A673 (cell line): ENCODE measurements at regions of chr11 and their contacts with region 1.

Region 1: GRCh38 chr11:35822815-35823495 is 120.9 kb upstream of the LDLRAD3 start:
- DNase-seq: peak; percentile 59
- H3K4me3 ChIP-seq: no peak overlapping the region
- H3K27ac ChIP-seq: no peak overlapping the region
- H3K4me1 ChIP-seq: peaks cover 13% of the 10 kb centered on the region
- H3K27me3 ChIP-seq: no peaks in the 10 kb centered on the region
- CTCF ChIP-seq: no peak

Region 2: GRCh38 chr11:35617687-35618496 is 205.1 kb before region 1 on chr11 and contains the start of gene FJX1:
- CTCF ChIA-PET with region 1: interaction called, 41 read pairs
- POLR2A ChIA-PET with region 1: no interaction called
- intact Hi-C with region 1: loop called (anchors 1 kb)
- DNase-seq: peak; percentile 98
- H3K4me3 ChIP-seq: peak within 1 kb of the TSS; percentile 56
- H3K27ac ChIP-seq: peak within 1 kb of the TSS; percentile 72
- H3K4me1 ChIP-seq: peaks cover 54% of the 10 kb centered on the region
- H3K27me3 ChIP-seq: peaks cover 7% of the 10 kb centered on the region
- CTCF ChIP-seq: no peak
- total RNA-seq, gene FJX1: 40.4 and 50.1 TPM in 2 replicates

Region 3: DNA sequence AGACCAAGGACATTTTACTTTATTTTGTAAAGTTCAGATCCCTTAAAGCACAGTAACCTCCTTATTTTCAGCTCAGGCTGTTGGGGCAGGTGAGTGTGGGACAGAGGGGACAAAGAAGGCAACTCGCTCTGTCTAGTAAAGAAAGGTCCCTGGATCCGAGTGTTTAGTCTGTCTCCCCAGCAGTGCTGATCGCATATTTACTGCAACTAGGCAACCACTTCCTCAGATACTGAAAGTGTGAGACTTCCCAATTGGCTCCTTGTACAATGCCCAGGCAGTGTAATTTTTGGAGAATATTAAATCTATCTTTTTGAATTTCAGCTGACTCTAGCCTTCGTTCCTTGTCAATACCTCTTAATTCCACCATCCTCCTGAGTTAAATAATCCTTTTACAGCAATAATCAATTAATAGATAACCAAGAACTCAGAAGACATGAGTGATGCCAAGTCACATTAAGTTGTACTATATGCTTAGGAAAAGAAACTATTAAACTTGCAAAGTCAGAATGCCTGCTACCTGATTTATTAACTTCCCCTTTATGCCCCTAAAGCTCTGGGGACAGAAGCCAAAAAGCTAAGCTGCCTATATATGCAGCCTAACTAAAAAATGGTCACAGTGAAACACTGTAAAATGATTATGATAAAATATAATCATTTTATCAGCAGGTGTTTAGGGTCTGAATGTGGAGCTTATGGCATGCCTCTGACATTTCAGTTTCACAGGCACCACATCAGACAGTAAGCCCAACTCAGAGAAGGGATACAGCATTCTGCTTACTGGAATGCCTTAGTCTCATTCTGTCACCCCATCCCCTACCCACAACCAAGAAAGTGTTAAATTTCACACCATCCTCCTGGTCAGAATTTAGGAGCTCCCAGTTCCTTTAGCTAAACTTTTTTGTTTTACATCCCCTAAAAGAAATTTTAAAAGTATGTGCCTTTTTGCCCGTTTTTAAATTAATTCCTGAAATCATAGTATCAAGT is 21.7 kb before region 1 on chr11:
- CTCF ChIA-PET with region 1: interaction called, 30 read pairs
- POLR2A ChIA-PET with region 1: no interaction called
- intact Hi-C with region 1: no loop called
- DNase-seq: no peak
- H3K4me3 ChIP-seq: no peak overlapping the region
- H3K27ac ChIP-seq: no peak overlapping the region
- H3K4me1 ChIP-seq: peaks cover 6% of the 10 kb centered on the region
- H3K27me3 ChIP-seq: no peaks in the 10 kb centered on the region
- CTCF ChIP-seq: no peak

Region 4: GRCh38 chr11:35927730-35928129 is 104.8 kb after region 1 on chr11:
- CTCF ChIA-PET with region 1: interaction called, 13 read pairs
- POLR2A ChIA-PET with region 1: no interaction called
- intact Hi-C with region 1: no loop called
- DNase-seq: peak; percentile 72
- H3K4me3 ChIP-seq: peak overlapping the region; percentile 4
- H3K27ac ChIP-seq: no peak overlapping the region
- H3K4me1 ChIP-seq: peaks cover 11% of the 10 kb centered on the region
- H3K27me3 ChIP-seq: no peaks in the 10 kb centered on the region
- CTCF ChIP-seq: no peak

Region 5: DNA sequence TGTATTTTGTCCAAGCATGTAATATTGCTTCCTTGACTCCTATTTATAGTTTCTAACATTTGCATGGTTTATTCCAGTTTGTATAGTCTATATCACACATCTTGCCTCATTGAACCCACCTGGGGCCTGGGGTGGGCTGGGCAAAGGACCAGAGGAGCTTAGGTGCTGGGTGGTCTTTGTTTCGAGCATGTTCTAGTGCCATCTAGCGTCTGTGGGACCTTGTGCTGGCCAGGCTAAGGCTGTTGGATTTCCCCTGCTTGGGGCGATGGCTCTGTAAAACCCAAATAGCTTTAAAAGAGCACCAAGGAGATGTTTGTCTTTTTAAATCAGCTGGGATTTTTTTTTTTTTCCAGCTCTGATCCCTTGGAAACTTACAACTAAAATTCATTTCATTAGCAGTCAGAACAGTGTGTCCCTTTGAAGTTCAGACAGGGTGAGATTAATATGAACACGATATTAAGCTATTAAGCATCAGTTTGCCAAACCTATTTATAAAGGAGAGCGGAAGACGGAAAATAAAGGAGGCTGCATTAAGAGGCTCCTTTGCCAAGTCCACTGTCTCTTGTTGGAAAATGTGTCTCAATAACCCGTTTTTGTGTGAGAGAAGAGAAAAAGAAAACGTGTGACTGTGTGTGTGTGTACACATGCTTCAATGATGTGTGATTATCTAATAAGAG is 308.9 kb after region 1 on chr11:
- CTCF ChIA-PET with region 1: interaction called, 68 read pairs
- POLR2A ChIA-PET with region 1: no interaction called
- intact Hi-C with region 1: loop called (anchors 1 kb)
- DNase-seq: peak; percentile 77
- H3K4me3 ChIP-seq: no peak overlapping the region
- H3K27ac ChIP-seq: no peak overlapping the region
- H3K4me1 ChIP-seq: peaks cover 1% of the 10 kb centered on the region
- H3K27me3 ChIP-seq: no peaks in the 10 kb centered on the region
- CTCF ChIP-seq: peak; percentile 99

Region 6: DNA sequence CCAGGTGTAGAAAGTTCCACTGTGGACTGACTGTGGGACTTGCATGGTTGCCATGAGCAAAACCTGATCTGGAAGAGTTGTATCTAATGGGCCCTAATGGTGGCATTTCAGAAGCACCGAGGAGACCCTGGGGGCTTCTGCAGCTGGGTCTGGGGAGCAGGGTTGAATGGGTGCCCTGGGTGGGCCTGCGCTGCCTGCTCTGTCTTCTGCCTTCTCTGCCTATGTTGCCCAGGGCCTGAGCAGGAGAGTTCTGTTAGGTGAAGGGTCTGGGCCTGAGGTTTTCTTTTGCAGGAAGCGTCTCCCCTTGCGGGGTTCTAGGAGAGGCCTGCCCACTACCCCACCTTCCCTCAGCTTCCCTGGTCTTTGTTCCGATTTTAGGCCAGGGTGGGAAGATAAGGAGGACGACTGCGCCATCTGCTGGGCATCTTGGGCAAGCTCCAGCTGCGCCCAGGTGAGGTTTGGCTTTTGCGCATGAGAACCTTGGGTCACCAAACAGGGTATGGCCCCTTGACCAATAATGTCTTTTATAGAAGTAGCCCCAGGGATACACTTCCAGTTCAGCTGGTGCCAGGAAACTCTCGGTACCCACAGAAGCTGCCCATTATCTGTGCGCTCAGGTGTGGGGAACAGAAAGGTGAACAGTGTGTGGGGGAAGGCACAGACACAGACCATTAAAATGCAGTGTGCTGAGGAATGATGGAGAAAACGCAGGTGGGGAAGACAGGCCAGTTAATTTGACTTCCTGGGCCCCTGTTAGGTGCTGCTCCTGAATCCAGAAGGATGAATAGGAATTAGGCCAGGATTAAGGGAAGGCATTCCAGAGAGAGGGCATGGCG is 443.1 kb after region 1 on chr11:
- CTCF ChIA-PET with region 1: interaction called, 49 read pairs
- POLR2A ChIA-PET with region 1: no interaction called
- intact Hi-C with region 1: no loop called
- DNase-seq: peak; percentile 87
- H3K4me3 ChIP-seq: no peak overlapping the region
- H3K27ac ChIP-seq: no peak overlapping the region
- H3K4me1 ChIP-seq: no peaks in the 10 kb centered on the region
- H3K27me3 ChIP-seq: peaks cover 2% of the 10 kb centered on the region
- CTCF ChIP-seq: peak; percentile 100

Region 7: DNA sequence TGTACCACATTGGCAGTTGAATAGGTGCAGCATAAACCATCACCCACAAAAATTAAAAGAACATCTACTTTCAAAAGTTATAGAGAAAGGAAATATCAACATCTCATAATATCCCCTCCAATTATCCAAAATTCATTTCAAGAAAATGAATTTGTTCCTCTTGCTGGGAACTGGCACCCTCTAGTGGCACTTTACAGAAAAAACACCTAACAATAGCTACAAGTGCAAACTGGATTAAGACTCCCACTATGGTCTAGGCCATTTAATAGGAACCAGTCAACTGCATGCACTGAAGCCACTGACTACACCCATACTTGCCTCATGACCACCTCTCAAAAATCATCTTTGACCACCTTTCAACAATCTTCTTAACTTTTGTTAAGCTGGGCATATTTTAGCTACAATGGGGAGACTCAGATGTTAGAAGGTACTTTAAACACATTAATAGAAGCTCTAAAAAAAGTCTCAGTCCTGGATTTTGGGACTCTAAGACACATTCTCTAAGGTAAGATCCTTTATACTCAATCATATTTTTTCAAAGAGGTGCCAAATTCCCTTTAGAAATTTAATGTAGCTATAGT is 669.9 kb after region 1 on chr11:
- CTCF ChIA-PET with region 1: interaction called, 10 read pairs
- POLR2A ChIA-PET with region 1: no interaction called
- intact Hi-C with region 1: loop called (anchors 5 kb)
- DNase-seq: peak; percentile 86
- H3K4me3 ChIP-seq: no peak overlapping the region
- H3K27ac ChIP-seq: no peak overlapping the region
- H3K4me1 ChIP-seq: peaks cover 11% of the 10 kb centered on the region
- H3K27me3 ChIP-seq: no peaks in the 10 kb centered on the region
- CTCF ChIP-seq: peak; percentile 100